Thyroid gland (tissue), 4 donors: ENCODE measurements at regions of chr12 and their contacts with region 1.

Region 1: DNA sequence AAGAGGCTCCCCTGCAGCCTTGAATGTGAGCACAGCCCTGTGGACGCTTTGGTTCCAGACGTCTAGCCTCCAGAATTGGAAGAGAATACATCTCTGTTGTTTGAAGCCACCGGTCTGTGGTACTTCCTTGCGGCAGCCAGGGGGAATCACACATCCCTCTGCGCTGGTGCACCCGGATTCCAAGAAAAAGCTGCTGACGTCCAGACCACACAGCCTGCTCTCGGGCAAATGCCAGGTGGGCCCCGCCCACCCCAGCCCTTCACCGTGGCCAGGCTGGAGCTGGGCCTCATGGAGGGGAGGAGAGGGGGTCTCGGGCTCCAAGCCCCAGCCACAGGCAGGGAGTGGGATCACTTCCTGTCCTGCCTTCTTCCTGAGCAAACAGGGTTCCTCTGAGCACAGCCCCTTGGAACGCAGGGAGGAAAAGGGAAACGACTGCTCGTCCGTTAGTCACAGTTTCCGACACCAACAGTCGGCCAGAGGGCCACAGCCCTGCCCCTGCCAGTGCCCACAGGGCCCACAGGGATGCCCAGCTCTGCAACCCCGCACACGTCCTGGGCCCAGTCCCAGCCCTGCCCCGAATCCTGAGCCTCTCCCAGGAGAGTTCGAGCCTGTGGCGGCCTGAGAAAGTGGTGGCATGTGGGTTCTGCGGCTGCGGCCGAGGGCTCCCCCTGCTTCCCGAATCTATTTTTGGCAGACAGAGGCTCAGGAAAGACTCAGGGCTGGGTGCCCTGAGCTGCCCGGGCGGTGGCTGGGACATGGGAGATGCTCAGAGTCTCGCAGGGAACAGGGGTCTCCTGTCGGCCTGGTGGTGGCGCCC is 85.3 kb downstream of the RFLNA start:
- DNase-seq: no peak
- H3K4me3 ChIP-seq: no peak overlapping the region
- H3K27ac ChIP-seq: peak overlapping the region; percentile 52 to 72 (median 71)
- H3K4me1 ChIP-seq: peaks cover 13 to 39% of the 10 kb centered on the region in 2 donors
- H3K27me3 ChIP-seq: no peaks in the 10 kb centered on the region
- CTCF ChIP-seq: peak in 5 of 6 experiments; percentile 10 to 32 (median 15)
- POLR2A ChIP-seq: no peak

Region 2: DNA sequence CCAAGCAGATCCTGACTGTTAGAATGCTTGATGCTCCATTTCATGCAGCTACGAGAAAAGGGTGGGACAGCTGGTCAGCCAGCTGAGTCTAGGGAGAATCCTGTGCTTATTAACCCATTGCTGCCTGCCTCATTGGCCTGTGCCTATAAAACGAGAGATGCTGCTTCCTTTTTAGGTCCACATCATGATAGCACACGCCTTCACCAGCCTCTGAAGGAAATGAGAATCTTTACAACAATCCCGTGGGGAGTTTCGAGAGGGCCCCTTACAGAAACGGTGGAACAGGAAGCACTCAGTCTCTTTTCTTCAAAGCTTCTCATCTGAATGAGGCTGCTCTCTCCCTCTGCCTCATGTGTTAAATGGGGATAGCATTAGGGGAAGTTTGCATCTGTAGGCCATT is 232.6 kb before region 1 on chr12:
- intact Hi-C with region 1: no loop called
- DNase-seq: no peak
- H3K4me3 ChIP-seq: no peak overlapping the region
- H3K27ac ChIP-seq: no peak overlapping the region
- H3K4me1 ChIP-seq: no peaks in the 10 kb centered on the region
- H3K27me3 ChIP-seq: no peaks in the 10 kb centered on the region
- CTCF ChIP-seq: no peak
- POLR2A ChIP-seq: no peak

Region 3: GRCh38 chr12:124469193-124469888 is 89.2 kb after region 1 on chr12:
- intact Hi-C with region 1: no loop called
- DNase-seq: no peak
- H3K4me3 ChIP-seq: no peak overlapping the region
- H3K27ac ChIP-seq: no peak overlapping the region
- H3K4me1 ChIP-seq: no peaks in the 10 kb centered on the region
- H3K27me3 ChIP-seq: no peaks in the 10 kb centered on the region
- CTCF ChIP-seq: peak; percentile 32 to 50 (median 38)
- POLR2A ChIP-seq: no peak

Region 4: DNA sequence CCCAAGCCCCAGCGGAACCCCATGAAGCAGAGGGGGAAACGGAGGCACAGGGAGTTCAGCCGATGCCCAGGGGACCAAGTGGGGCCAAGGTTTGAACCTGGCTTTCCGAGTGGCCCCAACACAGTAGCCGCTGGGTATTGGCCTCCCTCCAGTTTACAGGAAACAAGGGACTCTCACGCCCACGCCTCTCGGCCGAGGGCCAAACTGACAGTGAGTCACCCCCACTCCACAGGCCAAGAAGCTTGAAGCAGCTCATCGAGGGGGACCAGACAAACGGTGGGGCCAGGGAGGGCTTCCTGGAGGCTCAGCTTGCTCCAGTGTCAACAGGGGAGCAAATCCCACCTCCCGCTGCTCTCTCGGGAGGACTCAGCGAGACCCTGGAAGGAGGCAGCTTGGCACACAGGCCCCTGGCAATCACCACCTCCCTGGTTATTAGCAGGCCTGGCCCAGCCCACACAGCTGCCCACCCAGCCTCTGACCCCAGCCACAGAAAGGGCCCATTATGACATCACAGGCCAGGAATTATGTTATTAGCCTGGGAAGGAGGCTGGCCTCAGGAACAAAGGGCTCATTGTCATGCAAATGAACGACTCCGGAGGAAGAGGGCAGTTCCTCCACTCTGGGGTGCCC is 132.6 kb after region 1 on chr12:
- intact Hi-C with region 1: loop called (anchors 5 kb)
- DNase-seq: peak; percentile 96 to 98
- H3K4me3 ChIP-seq: no peak overlapping the region
- H3K27ac ChIP-seq: peak overlapping the region; percentile 64 to 82 (median 66)
- H3K4me1 ChIP-seq: peaks cover 52 to 74% of the 10 kb centered on the region in 2 donors
- H3K27me3 ChIP-seq: no peaks in the 10 kb centered on the region
- CTCF ChIP-seq: no peak
- POLR2A ChIP-seq: no peak